AG04449 (cell line): ENCODE measurements at regions of chr19 and their contacts with region 1.

Region 1: GRCh38 chr19:2962045-2962561 is 15.3 kb upstream of the TLE6 start:
- DNase-seq: no peak
- H3K4me3 ChIP-seq: peak overlapping the region; percentile 12; the same call in 1 of the 2 replicates
- CTCF ChIP-seq: peak; percentile 43

Region 2: DNA sequence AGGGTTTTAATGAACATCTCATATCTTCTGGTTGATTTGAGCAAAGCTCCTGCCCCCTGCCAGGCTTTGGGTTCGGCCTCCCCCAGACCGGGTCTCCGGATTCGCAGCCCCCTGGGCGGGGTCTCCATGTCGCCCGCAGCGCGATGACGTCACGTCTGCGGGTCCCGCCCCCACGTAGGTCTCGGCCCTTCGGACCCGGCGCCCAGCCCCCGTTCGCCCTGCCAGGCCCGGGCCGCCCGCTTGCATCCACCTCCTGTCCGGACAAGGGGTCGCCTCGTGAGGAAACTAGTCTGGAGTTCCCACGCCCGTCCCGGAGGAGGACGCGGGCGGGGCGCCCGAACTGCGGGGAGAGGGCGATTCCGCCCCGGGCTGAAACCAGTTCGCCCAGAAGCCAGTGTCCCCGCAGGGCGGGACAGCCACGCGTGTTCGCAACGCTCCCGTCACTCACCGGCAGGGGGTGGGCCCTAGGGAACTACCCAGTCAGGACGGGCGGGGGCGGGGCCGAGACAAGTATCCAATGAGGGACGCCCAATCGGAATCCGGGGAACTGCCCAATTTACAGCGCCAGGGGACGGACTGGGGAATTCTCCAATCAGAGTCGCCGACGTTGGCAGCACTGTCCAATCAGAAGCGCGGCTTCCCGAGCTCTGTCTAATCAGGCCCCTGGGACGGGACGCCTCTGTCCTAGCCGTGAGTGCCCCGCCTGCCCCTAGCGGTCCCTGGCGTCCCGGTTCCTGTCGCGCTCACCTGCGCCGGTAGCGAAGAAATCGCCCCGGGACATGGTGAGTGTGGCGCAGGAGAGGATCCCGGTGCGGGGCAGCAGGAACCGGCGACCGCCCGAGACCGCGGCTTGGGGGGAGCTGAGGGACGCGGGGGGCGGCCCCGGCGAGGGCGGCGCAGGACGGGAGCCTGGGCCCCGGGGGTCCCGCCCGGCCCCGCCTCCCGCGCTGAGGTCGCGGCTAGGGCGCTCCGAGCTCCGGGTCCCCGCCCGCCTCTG is 121.0 kb before region 1 on chr19 and contains the start of gene ZNF555:
- CTCF ChIA-PET with region 1: no interaction called
- POLR2A ChIA-PET with region 1: no interaction called
- DNase-seq: peak; percentile 93
- H3K4me3 ChIP-seq: peak within 1 kb of the TSS; percentile 89
- CTCF ChIP-seq: peak; percentile 60

Region 3: DNA sequence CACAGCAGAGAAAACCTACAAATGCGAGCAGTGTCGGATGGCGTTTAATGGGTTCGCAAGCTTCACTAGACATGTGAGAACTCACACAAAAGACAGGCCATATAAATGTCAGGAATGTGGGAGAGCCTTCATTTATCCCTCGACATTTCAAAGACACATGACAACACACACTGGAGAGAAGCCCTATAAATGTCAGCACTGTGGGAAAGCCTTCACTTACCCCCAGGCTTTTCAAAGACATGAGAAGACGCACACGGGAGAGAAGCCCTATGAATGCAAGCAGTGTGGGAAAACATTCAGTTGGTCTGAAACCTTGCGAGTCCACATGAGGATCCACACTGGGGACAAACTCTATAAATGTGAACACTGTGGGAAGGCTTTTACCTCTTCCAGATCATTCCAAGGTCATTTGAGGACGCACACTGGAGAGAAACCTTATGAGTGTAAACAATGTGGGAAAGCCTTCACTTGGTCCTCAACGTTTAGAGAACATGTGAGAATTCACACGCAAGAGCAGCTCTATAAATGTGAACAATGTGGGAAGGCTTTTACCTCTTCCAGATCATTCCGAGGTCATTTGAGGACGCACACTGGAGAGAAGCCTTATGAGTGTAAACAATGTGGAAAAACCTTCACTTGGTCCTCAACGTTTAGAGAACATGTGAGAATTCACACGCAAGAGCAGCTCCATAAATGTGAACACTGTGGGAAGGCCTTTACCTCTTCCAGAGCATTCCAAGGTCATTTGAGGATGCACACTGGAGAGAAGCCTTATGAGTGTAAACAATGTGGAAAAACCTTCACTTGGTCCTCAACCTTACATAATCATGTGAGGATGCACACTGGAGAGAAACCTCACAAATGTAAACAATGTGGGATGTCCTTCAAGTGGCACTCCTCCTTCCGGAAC is 44.6 kb before region 1 on chr19:
- CTCF ChIA-PET with region 1: no interaction called
- POLR2A ChIA-PET with region 1: no interaction called
- DNase-seq: no peak
- H3K4me3 ChIP-seq: no peak overlapping the region
- CTCF ChIP-seq: no peak

Region 4: GRCh38 chr19:2977001-2977685 is 15.0 kb after region 1 on chr19 and contains the start of gene TLE6:
- CTCF ChIA-PET with region 1: interaction called, 22 read pairs
- POLR2A ChIA-PET with region 1: no interaction called
- DNase-seq: no peak
- H3K4me3 ChIP-seq: peak within 1 kb of the TSS; percentile 65
- CTCF ChIP-seq: no peak

Region 5: GRCh38 chr19:3041761-3042620 is 79.9 kb after region 1 on chr19:
- CTCF ChIA-PET with region 1: no interaction called
- POLR2A ChIA-PET with region 1: no interaction called
- DNase-seq: no peak
- H3K4me3 ChIP-seq: no peak overlapping the region
- CTCF ChIP-seq: no peak